Calu3 (cell line): ENCODE measurements at regions of chr17 and their contacts with region 1.

Region 1: GRCh38 chr17:40417609-40418427 is at the start of gene TOP2A:
- DNase-seq: peak; percentile 100
- H3K4me3 Mint-ChIP-seq: peak within 1 kb of the TSS; percentile 96
- H3K27ac Mint-ChIP-seq: peak within 1 kb of the TSS; percentile 94
- H3K4me1 Mint-ChIP-seq: peaks cover 42% of the 10 kb centered on the region
- H3K27me3 Mint-ChIP-seq: no peaks in the 10 kb centered on the region
- CTCF ChIP-seq: no peak
- total RNA-seq, gene TOP2A: 1,389 and 1,672 TPM in 2 replicates

Region 2: DNA sequence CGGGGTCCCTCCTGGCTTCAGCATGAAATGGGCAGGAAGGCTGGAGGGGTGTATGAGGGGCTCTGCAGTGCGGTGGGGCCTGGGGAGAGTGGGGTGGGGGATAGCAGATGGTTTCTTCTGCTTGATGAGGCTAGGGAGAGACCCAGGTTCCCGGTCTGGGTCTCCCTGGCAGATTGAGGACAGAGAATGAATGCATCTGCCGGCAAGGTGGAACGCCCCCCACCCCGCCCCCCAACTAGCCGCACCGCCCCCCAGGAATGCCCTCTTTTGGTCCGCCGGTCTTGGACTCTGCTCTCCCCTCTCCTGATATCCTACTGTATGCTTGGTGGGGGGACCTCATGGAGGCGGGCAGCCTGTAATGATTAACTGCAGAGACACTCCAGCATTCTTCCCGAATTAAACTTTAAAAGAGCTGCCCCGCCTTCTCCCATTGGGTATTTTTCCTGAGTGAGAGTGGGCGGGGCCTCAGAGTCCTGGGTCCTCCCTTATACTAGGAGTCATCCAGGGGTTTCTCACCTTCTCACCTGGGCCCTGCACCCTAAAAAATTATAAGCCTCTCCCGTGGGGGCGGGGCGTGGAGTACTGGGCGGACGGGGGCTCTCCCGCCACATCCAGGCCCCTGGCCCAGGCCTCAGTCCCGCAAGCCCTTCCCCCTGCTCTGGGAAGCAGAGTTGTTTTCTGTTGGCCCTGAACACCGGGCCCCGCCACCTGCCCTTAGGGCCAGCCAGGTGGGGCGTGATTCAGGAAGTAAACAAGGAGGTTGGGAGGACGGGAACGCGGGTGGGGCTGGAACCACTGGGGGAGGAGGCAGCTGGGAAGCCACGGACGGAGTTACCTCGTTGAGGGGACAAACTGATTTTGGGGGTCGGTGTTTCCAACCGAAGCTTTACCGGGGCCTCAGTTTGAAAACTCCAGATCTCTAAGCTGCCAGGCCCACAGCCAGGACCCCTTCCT is 678.6 kb before region 1 on chr17:
- CTCF ChIA-PET with region 1: interaction called, 10 read pairs
- intact Hi-C with region 1: no loop called
- DNase-seq: peak; percentile 100
- H3K4me3 Mint-ChIP-seq: peak overlapping the region; percentile 77
- H3K27ac Mint-ChIP-seq: peak overlapping the region; percentile 21
- H3K4me1 Mint-ChIP-seq: peaks cover 54% of the 10 kb centered on the region
- H3K27me3 Mint-ChIP-seq: no peaks in the 10 kb centered on the region
- CTCF ChIP-seq: no peak

Region 3: GRCh38 chr17:39939588-39940419 is 478.0 kb before region 1 on chr17:
- CTCF ChIA-PET with region 1: interaction called, 12 read pairs
- intact Hi-C with region 1: no loop called
- DNase-seq: peak; percentile 76
- H3K4me3 Mint-ChIP-seq: no peak overlapping the region
- H3K27ac Mint-ChIP-seq: no peak overlapping the region
- H3K4me1 Mint-ChIP-seq: peaks cover 12% of the 10 kb centered on the region
- H3K27me3 Mint-ChIP-seq: peaks cover 63% of the 10 kb centered on the region
- CTCF ChIP-seq: no peak

Region 4: GRCh38 chr17:40139566-40140058 is 278.2 kb before region 1 on chr17:
- CTCF ChIA-PET with region 1: interaction called, 10 read pairs
- intact Hi-C with region 1: no loop called
- DNase-seq: peak; percentile 72
- H3K4me3 Mint-ChIP-seq: peak overlapping the region; percentile 98
- H3K27ac Mint-ChIP-seq: peak overlapping the region; percentile 98
- H3K4me1 Mint-ChIP-seq: peaks cover 45% of the 10 kb centered on the region
- H3K27me3 Mint-ChIP-seq: no peaks in the 10 kb centered on the region
- CTCF ChIP-seq: no peak

Region 5: DNA sequence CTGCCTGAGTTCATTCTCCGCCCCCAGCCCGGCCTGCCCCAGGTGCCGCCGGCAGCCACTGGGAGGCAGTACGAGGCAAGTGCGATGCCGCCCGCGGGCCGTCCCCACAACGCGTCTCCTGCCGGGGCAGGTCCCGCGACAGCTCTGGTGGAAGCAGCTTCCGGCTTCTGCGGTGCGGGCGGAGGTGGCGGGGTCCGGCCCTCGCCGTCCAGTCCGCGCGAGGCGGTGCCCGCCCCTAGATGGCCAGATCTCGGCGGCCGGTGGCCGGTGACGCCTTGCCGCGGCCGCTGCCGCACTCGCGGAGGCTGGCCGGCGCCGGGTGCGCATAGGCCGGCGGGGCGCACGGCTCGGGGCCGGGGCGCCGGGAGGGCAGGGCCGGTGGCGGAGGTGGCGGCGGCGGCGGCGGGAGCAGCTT is 55.1 kb before region 1 on chr17:
- CTCF ChIA-PET with region 1: interaction called, 129 read pairs
- intact Hi-C with region 1: loop called (anchors 1 kb)
- DNase-seq: peak; percentile 100
- H3K4me3 Mint-ChIP-seq: peak overlapping the region; percentile 81
- H3K27ac Mint-ChIP-seq: no peak overlapping the region
- H3K4me1 Mint-ChIP-seq: peaks cover 39% of the 10 kb centered on the region
- H3K27me3 Mint-ChIP-seq: peaks cover 9% of the 10 kb centered on the region
- CTCF ChIP-seq: no peak

Region 6: GRCh38 chr17:40457964-40458791 is 40.4 kb after region 1 on chr17:
- CTCF ChIA-PET with region 1: interaction called, 95 read pairs
- intact Hi-C with region 1: no loop called
- DNase-seq: peak; percentile 99
- H3K4me3 Mint-ChIP-seq: peak overlapping the region; percentile 13
- H3K27ac Mint-ChIP-seq: no peak overlapping the region
- H3K4me1 Mint-ChIP-seq: peaks cover 33% of the 10 kb centered on the region
- H3K27me3 Mint-ChIP-seq: peaks cover 29% of the 10 kb centered on the region
- CTCF ChIP-seq: no peak

Region 7: DNA sequence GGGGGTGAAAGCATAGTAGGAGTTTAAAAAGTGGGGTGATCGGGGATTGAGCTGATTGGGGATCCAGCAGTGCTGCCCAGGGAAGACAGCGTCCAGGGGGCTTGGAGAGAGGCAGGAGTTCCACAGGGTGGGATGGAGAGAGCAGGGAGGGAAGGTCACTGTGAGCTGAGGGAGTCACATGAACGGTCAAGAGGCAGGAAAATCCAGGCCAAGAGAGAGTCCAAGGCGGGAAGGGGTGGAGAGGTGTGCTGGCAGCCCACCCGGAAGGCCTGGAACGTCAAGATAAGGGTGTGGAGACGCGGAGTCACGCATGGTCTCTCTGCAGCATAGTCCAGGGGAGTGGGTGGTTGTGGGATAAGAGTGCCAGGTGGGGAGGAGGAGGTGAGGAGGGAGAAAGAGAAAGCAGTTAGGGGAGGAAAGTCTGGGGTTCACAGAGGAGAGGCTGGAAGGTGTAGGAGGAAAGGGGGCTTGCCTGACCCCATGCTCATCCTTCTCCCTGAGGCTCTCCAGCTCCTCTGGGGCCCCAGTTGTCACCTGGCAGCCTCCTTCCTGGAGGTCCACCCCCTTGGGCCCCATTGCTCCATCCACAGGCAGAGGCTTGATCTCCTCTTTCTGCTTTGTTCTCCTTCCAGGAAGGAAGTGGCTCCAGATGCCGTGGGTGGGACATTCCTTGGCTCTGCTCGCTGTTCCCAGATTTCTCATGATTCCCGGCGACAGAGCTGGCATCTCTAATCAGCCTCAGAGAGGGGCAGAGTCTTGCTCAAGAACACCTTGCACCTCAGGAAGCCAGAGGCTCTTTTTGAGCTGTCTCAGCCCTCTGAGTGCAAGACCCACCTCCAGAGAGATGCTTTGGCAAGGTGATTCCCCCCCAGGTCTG is 118.7 kb after region 1 on chr17:
- CTCF ChIA-PET with region 1: interaction called, 498 read pairs
- intact Hi-C with region 1: loop called (anchors 5 kb)
- DNase-seq: peak; percentile 68
- H3K4me3 Mint-ChIP-seq: no peak overlapping the region
- H3K27ac Mint-ChIP-seq: no peak overlapping the region
- H3K4me1 Mint-ChIP-seq: peaks cover 24% of the 10 kb centered on the region
- H3K27me3 Mint-ChIP-seq: peaks cover 85% of the 10 kb centered on the region
- CTCF ChIP-seq: no peak